Psoas muscle (tissue), 8 donors: ENCODE measurements at regions of chr22 and their contacts with region 1.

Region 1: GRCh38 chr22:23685205-23685784 is 5.5 kb upstream of the RGL4 start:
- DNase-seq: peak; percentile 56 to 79
- ATAC-seq: peak; percentile 64 to 77 (median 74)
- H3K4me3 ChIP-seq: no peak overlapping the region
- H3K27ac ChIP-seq: peak overlapping the region; percentile 90
- H3K4me1 ChIP-seq: peaks cover 45% of the 10 kb centered on the region
- H3K27me3 ChIP-seq: no peaks in the 10 kb centered on the region
- CTCF ChIP-seq: no peak

Region 2: GRCh38 chr22:22576244-22576988 is 1108.9 kb before region 1 on chr22:
- intact Hi-C with region 1: no loop called
- DNase-seq: peak; percentile 43 to 64
- ATAC-seq: no peak
- H3K4me3 ChIP-seq: no peak overlapping the region
- H3K27ac ChIP-seq: no peak overlapping the region
- H3K4me1 ChIP-seq: no peaks in the 10 kb centered on the region
- H3K27me3 ChIP-seq: peaks cover 0 to 5% (median 3%) of the 10 kb centered on the region in 3 donors
- CTCF ChIP-seq: peak; percentile 46

Region 3: DNA sequence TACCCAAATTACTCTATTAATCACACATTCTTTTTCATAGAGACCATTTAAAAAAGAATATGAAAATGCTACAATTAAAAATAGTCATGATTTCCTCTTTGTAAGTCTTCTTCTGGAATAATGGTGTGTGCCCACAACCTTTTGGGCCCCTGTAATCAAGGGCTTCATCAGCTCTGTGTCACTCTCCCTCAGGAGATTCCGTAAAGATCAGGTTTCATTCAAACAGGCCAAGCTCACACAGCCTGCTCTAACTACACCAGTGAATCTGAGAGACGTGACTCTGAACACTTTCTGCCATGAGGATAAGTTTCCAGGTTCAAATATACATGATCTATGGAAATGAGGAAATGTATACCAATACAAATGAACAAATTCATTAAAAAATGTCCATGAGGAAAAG is 62.7 kb before region 1 on chr22:
- intact Hi-C with region 1: no loop called
- DNase-seq: no peak
- ATAC-seq: peak in 3 of 4 donors; percentile 70 to 76 (median 70)
- H3K4me3 ChIP-seq: no peak overlapping the region
- H3K27ac ChIP-seq: no peak overlapping the region
- H3K4me1 ChIP-seq: no peaks in the 10 kb centered on the region
- H3K27me3 ChIP-seq: no peaks in the 10 kb centered on the region
- CTCF ChIP-seq: no peak

Region 4: DNA sequence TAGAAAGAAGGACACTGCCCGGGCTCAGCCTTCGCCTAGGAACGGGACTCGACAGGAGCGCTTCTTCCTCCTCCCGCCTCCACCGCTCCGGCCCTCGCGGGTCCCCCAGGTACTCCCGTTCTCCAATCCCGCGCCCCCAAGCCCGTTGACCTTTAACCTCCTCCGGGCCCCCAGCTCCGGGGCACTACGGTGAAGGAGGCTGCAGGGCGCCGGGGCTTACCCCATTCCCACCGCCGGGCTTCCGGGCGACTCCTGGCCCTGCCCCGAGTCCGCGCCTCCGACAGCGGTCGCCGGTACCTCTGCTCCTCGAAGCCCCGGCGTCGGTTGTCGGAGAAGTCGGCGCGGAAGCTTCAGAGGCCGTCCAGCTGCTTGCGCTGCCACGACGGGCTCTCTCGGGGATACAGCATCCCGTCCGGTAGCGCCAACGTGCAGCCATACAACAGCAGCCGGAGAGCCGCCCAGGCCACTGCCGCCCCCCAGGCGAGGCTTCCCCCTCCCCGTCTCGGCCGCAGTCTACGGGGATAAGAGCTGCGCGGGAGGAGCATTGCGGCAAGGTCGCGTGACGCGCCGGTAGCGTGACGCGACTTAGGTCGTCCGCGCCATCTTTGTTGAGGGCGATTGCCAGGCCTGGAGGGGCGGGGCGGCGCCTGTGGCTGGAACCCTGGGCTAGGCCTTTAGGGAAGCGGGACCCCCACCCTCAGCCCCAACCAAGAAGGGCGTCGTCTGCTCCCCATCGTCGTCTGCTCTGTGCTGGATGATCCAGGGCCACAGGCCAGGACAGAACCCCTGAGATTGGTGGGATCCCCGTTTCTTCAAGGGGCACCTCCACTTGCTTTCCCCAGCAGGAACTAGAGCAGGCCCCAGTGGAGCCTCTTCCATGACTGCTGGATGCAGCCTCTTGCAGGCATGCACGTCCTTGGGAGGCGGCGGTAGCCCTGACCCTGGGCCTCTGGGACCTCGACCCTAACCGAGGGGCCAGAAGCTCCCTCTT is 31.8 kb after region 1 on chr22:
- intact Hi-C with region 1: loop called in 1 of 2 experiments (anchors 5 kb)
- DNase-seq: peak; percentile 87 to 90
- ATAC-seq: peak; percentile 92 to 97 (median 94)
- H3K4me3 ChIP-seq: peak overlapping the region; percentile 98
- H3K27ac ChIP-seq: peak overlapping the region; percentile 85
- H3K4me1 ChIP-seq: peaks cover 3% of the 10 kb centered on the region
- H3K27me3 ChIP-seq: no peaks in the 10 kb centered on the region
- CTCF ChIP-seq: no peak

Region 5: GRCh38 chr22:23743303-23743705 is 58.0 kb after region 1 on chr22:
- intact Hi-C with region 1: loop called in 1 of 2 experiments (anchors 5 kb)
- DNase-seq: peak; percentile 66 to 90
- ATAC-seq: peak; percentile 43 to 67 (median 59)
- H3K4me3 ChIP-seq: no peak overlapping the region
- H3K27ac ChIP-seq: peak overlapping the region; percentile 87
- H3K4me1 ChIP-seq: peaks cover 17% of the 10 kb centered on the region
- H3K27me3 ChIP-seq: no peaks in the 10 kb centered on the region
- CTCF ChIP-seq: no peak

Region 6: DNA sequence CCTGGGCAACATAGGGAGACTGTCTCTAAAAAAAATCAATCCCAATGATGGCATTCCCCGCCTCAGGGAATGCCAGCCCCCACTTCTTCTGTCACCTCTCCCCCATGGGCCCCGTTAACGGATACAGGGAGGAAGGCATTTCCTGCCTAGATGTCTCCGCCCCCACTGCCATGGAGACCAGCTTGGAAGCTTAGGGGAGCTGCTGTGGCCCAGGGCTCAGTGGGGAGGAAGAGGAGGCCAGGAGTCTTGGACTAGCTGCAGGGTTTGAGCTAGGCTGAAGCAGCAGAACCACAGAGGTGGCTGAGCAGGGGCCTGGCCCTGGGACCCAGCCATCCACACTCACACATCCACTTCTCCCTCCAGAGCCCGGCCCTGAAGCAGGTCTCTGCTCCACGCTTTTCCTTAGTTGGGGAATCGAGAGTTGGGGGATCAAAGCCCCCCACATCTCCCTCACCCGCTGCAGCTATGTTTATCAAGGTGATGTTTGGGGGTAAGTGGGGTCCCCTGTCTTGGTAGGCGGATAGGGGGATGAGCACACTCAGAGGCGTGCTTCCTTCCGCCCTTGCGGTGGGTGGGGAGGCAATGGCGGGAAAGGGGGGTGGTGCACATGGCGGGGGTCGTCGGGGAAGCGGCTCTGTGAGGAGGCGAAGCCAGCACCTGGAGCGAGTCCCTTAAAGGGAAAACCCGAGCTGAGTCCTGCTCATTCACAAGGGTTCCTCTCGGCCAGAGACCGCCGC is 77.7 kb after region 1 on chr22 and contains the start of gene C22orf15:
- intact Hi-C with region 1: no loop called
- DNase-seq: peak in 1 of 2 donors; percentile 62
- ATAC-seq: no peak
- H3K4me3 ChIP-seq: no peak within 1 kb of the TSS
- H3K27ac ChIP-seq: peak within 1 kb of the TSS; percentile 46
- H3K4me1 ChIP-seq: peaks cover 24% of the 10 kb centered on the region
- H3K27me3 ChIP-seq: no peaks in the 10 kb centered on the region
- CTCF ChIP-seq: no peak
- total RNA-seq, gene C22orf15: 0.34 TPM in 1 of 4 donors, not detected in the others